Activated CD8-positive, alpha-beta T cell treated with anti-CD3 and anti-CD28 coated beads for 36 hours (primary cell): ENCODE measurements at regions of chr11 and their contacts with region 1.

Region 1: GRCh38 chr11:116732271-116733042 is 40.3 kb downstream of the BUD13 start:
- DNase-seq: peak; percentile 80
- ATAC-seq: peak; percentile 98
- H3K4me3 Mint-ChIP-seq: no peak overlapping the region
- H3K27ac Mint-ChIP-seq: no peak overlapping the region
- H3K4me1 Mint-ChIP-seq: peaks cover 15% of the 10 kb centered on the region
- H3K27me3 Mint-ChIP-seq: no peaks in the 10 kb centered on the region
- CTCF ChIP-seq: peak; percentile 85

Region 2: DNA sequence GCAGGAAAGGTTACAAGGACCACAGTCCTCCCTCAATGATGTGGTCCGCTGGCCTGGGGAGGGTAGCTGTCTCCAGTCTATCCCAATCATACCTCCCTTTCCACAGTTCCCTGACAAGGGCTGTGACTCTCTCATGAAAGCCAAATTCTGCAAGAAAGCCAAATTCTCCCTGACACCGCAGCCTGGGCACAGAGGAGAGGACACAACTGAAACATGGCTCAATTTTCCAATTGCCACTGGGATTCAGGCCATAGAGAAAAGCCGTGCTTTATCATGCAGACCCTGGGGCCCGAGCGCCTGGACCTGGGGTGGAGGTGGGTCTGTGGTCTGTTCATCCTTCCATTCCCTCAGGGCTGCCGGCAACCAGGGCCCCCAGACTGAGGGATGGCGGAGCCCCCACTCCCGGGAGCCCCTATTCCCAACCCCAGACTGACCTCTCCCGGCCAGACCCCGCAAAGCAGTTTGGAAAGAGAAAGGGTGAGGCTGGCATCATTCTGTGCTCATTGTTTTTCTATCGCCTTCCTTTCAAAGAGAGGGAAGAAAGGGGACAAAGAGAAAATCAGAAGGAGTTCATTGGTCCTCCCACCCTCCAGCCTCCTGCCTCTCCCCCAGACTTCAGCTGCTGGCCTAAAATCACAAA is 199.2 kb before region 1 on chr11:
- CTCF ChIA-PET with region 1: no interaction called
- POLR2A ChIA-PET with region 1: no interaction called
- intact Hi-C with region 1: no loop called
- DNase-seq: no peak
- ATAC-seq: no peak
- H3K4me3 Mint-ChIP-seq: no peak overlapping the region
- H3K27ac Mint-ChIP-seq: no peak overlapping the region
- H3K4me1 Mint-ChIP-seq: no peaks in the 10 kb centered on the region
- H3K27me3 Mint-ChIP-seq: peaks cover 13% of the 10 kb centered on the region
- CTCF ChIP-seq: no peak

Region 3: DNA sequence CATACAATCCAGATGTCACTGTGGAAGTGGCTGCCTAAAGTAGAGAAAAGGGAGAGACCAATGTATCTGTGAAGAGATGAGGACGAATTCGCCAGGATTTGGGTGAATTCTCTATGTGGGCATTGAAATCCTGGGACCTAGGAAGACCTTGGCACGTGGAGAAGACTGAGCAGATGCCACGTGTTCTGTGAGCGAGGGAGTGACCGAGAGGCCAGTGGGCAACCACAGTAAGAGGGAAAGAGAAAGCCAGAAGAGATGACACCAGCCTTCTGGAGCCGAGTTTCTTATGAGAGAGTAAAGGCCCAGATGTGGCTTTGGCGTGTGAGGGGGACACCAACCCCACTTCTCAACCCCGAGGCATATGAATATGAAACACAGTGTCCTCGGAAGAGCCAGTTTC is 187.7 kb before region 1 on chr11:
- CTCF ChIA-PET with region 1: no interaction called
- POLR2A ChIA-PET with region 1: no interaction called
- intact Hi-C with region 1: no loop called
- DNase-seq: no peak
- ATAC-seq: no peak
- H3K4me3 Mint-ChIP-seq: no peak overlapping the region
- H3K27ac Mint-ChIP-seq: no peak overlapping the region
- H3K4me1 Mint-ChIP-seq: no peaks in the 10 kb centered on the region
- H3K27me3 Mint-ChIP-seq: peaks cover 7% of the 10 kb centered on the region
- CTCF ChIP-seq: no peak

Region 4: DNA sequence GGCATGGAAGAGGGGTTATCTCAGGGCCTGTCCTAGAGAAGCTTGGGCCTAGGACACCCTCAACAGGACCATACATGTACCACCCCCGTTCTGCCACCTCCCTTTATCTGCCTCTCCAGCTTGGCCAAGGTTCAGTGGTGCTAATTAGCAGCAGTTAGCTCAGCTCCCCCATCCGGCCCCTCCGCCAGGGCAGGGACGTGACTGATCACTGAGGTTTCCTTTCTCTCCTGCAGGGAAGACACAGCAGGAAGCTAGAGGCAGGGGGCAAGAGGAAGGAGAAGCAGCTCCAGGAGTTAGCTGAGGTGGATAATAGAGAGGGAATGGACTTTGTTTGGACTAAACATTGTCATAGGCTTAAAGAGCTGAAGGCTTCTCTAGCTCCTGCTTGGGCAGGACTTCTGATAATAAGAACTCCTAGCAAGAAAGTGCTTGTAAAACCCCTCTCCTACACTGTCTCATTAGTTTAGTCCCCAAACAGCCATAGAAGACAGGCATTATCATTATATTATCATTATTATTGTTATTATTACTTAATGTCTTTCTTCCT is 13.4 kb before region 1 on chr11:
- CTCF ChIA-PET with region 1: interaction called, 14 read pairs
- POLR2A ChIA-PET with region 1: no interaction called
- intact Hi-C with region 1: no loop called
- DNase-seq: no peak
- ATAC-seq: no peak
- H3K4me3 Mint-ChIP-seq: no peak overlapping the region
- H3K27ac Mint-ChIP-seq: no peak overlapping the region
- H3K4me1 Mint-ChIP-seq: no peaks in the 10 kb centered on the region
- H3K27me3 Mint-ChIP-seq: no peaks in the 10 kb centered on the region
- CTCF ChIP-seq: no peak

Region 5: DNA sequence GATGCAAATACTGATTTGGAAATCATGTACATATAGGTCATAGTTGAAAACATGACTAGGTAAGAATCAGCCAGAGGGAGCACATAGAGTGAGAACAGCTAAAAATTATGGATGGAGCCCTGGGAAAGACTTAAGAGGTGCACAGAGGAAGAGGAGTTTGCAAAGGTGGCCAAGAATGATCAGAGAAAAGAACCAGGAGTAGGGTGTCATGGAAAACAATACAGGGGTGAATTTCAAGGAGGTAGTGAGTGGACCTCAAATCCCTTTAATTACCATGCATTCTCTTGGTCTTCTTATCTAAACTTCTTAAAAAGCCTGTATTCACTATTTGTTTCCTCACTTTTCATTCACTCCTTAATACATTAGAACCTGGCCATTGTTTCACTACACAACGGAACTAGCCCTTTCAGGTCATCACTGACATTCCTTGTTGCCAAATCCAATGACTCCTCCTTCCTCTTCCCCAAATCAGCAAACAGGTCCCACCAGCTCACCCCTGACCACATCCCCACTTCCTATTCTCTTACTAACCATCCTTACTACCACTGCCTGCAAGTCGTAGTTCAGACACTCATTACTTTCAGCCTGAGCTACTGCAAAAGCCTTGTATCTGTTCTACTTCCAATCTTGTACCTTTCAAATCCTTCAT is 17.7 kb after region 1 on chr11:
- CTCF ChIA-PET with region 1: interaction called, 48 read pairs
- POLR2A ChIA-PET with region 1: no interaction called
- intact Hi-C with region 1: no loop called
- DNase-seq: no peak
- ATAC-seq: no peak
- H3K4me3 Mint-ChIP-seq: no peak overlapping the region
- H3K27ac Mint-ChIP-seq: no peak overlapping the region
- H3K4me1 Mint-ChIP-seq: no peaks in the 10 kb centered on the region
- H3K27me3 Mint-ChIP-seq: no peaks in the 10 kb centered on the region
- CTCF ChIP-seq: no peak

Region 6: DNA sequence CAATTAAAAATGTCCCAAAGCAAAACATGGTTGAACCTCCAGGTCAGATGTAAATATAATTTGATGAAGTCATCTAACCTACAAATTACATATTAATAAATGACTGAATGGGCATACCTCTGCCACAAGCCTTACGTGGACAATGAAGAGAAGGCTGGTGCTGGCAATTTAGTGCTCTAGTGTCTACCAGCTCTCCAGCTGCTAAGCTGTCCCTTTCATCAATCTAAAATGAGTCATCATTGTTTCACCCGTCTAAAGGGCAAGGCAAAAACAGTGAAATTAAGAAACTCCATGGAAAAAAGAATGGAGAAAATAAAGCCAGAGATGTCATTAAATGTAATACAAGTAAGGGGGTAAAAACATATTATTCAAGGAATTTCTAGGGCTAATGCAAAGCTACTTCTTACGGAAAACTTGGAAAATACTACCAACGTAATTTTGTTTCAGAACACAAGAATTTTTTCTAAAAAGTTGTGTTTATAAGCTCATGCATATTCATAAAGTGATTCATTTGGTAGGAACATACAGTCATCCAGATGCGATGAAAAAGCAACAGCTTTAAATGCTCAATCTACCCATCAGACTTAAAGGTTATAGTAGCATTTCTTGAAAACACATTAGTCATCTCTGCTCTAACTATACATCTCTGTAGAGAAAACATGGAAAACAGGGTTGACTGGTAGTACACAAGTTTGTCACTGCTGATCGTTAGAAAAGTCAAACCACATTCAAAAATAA is 294.3 kb after region 1 on chr11:
- CTCF ChIA-PET with region 1: no interaction called
- POLR2A ChIA-PET with region 1: no interaction called
- intact Hi-C with region 1: no loop called
- DNase-seq: peak; percentile 24
- ATAC-seq: peak; percentile 77
- H3K4me3 Mint-ChIP-seq: no peak overlapping the region
- H3K27ac Mint-ChIP-seq: peak overlapping the region; percentile 91
- H3K4me1 Mint-ChIP-seq: peaks cover 67% of the 10 kb centered on the region
- H3K27me3 Mint-ChIP-seq: no peaks in the 10 kb centered on the region
- CTCF ChIP-seq: no peak